Naive thymus-derived CD4-positive, alpha-beta T cell (primary cell): ENCODE measurements at regions of chr9 and their contacts with region 1.

Region 1: DNA sequence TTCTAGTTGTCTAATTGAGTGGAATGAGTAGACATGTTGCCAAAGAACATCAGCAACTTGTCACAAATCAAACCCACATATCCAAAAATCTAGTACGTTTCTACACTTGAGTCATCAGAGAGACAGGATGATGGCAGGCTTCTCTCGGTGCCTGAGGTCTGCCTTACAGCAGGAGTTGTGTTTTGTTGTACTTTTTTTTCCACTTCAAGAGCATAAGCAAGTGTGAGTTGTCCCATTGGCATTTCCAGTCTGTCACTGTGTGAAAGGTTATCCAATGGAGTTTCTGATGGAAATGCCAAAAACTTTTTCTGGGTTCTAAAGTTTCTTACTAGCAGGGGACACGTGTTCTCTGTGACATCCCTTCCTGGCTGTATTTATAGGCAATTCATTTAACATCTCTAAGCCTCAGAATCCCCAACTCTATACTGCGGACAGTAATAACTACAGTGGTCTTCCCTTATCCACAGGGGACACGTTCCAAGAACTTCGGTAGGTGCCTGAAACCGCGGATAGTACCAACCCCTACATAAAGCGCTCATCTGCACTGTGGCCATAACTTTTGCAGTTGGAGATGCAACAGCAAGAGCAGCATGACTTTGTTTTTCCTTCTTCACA is 246.5 kb downstream of the SYK start:
- DNase-seq: peak in 1 of 9 donors; percentile 39
- ATAC-seq: peak; percentile 14
- H3K4me3 ChIP-seq: no peak overlapping the region
- H3K4me3 Mint-ChIP-seq: peak overlapping the region; percentile 55 to 78 (median 66)
- H3K27ac ChIP-seq: no peak overlapping the region
- H3K27ac Mint-ChIP-seq: peak overlapping the region in 6 of 9 donors; percentile 28 to 88 (median 41)
- H3K4me1 ChIP-seq: peaks cover 5 to 7% of the 10 kb centered on the region in 2 donors
- H3K4me1 Mint-ChIP-seq: peaks cover 9 to 55% (median 19%) of the 10 kb centered on the region in 7 donors
- H3K27me3 ChIP-seq: peaks cover 0 to 5% of the 10 kb centered on the region in 2 donors
- H3K27me3 Mint-ChIP-seq: peaks cover 11 to 34% (median 23%) of the 10 kb centered on the region in 5 donors

Region 2: DNA sequence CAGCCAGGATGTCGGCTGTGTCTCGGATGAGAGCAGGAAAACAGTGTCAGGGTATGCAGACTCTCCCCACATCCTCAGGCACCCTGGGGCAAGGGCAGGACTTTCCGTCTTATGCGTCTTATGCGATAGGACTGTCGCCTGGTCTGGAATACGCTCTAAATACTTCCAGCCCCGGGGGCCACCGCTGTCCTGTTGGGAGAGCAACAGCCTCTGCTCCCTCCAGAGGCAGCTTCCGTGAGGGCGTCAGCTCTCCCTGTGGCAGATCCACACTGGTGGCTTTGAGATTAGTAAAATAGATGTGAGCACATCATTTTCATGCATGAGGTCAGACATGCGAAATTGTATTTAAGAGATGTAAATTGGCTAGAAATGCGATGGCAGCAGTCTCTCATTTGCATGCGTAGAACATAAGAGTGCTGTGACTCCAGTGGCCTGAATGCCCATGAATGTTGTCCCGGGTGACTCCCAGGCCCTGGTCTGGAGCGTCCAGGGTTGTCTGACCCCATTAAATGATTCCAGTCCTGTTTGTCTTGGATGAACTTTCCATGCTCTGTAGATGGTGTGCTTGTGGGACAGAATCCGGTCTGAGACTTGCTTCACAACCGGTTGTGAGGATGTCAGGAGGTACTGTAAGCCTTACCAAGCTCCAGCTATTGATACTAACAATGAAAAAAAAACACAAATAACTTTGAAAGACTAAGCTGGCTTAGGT is 18.3 kb before region 1 on chr9:
- CTCF ChIA-PET with region 1: no interaction called
- POLR2A ChIA-PET with region 1: no interaction called
- intact Hi-C with region 1: no loop called
- DNase-seq: no peak
- ATAC-seq: no peak
- H3K4me3 ChIP-seq: no peak overlapping the region
- H3K4me3 Mint-ChIP-seq: no peak overlapping the region
- H3K27ac ChIP-seq: no peak overlapping the region
- H3K27ac Mint-ChIP-seq: no peak overlapping the region
- H3K4me1 ChIP-seq: no peaks in the 10 kb centered on the region
- H3K4me1 Mint-ChIP-seq: peaks cover 0 to 4% (median 0%) of the 10 kb centered on the region in 7 donors
- H3K27me3 ChIP-seq: no peaks in the 10 kb centered on the region
- H3K27me3 Mint-ChIP-seq: peaks cover 6 to 30% (median 14%) of the 10 kb centered on the region in 5 donors

Region 3: GRCh38 chr9:91071185-91071990 is 23.3 kb after region 1 on chr9:
- CTCF ChIA-PET with region 1: no interaction called
- POLR2A ChIA-PET with region 1: no interaction called
- intact Hi-C with region 1: loop called in 1 of 2 experiments (anchors 1 kb)
- DNase-seq: peak in 1 of 9 donors; percentile 69
- ATAC-seq: peak; percentile 34
- H3K4me3 ChIP-seq: no peak overlapping the region
- H3K4me3 Mint-ChIP-seq: peak overlapping the region in 1 of 10 donors; percentile 51
- H3K27ac ChIP-seq: no peak overlapping the region
- H3K27ac Mint-ChIP-seq: peak overlapping the region in 1 of 9 donors; percentile 76
- H3K4me1 ChIP-seq: no peaks in the 10 kb centered on the region
- H3K4me1 Mint-ChIP-seq: peaks cover 0 to 18% (median 0%) of the 10 kb centered on the region in 7 donors
- H3K27me3 ChIP-seq: no peaks in the 10 kb centered on the region
- H3K27me3 Mint-ChIP-seq: peaks cover 0 to 4% (median 0%) of the 10 kb centered on the region in 5 donors

Region 4: GRCh38 chr9:91253488-91253887 is 205.4 kb after region 1 on chr9:
- CTCF ChIA-PET with region 1: no interaction called
- POLR2A ChIA-PET with region 1: no interaction called
- intact Hi-C with region 1: loop called in 1 of 2 experiments (anchors 1 kb)
- DNase-seq: peak in 6 of 9 donors; percentile 5 to 32 (median 12)
- ATAC-seq: peak; percentile 64
- H3K4me3 ChIP-seq: no peak overlapping the region
- H3K4me3 Mint-ChIP-seq: no peak overlapping the region
- H3K27ac ChIP-seq: no peak overlapping the region
- H3K27ac Mint-ChIP-seq: peak overlapping the region in 1 of 9 donors; percentile 23
- H3K4me1 ChIP-seq: peaks cover 0 to 8% of the 10 kb centered on the region in 2 donors
- H3K4me1 Mint-ChIP-seq: peaks cover 0 to 45% (median 6%) of the 10 kb centered on the region in 7 donors
- H3K27me3 ChIP-seq: no peaks in the 10 kb centered on the region
- H3K27me3 Mint-ChIP-seq: no peaks in the 10 kb centered on the region